A549 (cell line): ENCODE measurements at regions of chr11 and their contacts with region 1.

Region 1: DNA sequence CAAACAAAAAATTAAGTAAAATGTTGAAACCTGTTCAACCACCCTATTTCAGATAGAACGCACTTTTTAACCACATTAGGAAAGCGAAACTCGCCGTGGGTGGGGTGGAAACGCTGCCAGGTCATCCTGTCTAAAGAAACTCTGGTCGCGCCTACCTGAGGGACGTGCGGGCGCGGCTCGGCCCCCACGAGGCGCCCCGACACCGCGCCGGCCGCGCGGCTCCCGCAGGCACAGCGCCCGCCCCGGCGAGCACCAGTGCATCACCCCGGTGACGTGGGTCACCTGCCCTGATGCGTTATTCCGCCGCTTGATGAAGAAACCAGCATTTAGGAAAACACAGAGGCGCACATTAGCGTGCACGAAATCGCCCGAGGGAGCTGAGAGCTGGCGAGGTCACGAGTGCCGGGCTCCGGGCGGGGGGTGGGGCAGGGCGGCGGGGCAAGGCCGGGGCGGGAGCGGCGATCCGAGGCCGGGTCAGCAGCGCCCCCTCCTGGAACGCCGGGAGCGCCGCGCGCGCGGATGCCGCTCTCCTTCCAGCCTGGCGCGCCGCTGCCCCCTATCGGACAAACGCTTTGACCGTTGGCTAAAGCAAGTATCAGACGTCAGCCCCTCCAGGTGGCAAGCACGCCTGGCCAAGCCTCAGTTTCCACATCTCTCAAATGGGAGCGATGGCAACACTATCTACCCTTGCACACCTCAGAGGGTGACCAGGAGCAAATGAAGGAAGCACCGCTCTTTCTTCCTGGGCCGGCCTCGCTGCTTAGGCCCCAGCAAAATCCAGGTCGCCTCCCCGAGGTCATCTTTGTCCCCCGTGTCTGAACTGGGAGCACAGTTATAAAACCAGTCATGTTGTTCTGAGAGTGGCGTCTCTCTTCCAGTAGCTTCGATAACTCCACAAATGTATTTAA is 15.7 kb upstream of the SNX32 start:
- DNase-seq: peak; percentile 81 to 88
- ATAC-seq: peak; percentile 91 to 93
- H3K4me3 ChIP-seq: peak overlapping the region; percentile 57
- H3K27ac ChIP-seq: peak overlapping the region; percentile 82 to 89
- H3K4me1 ChIP-seq: peaks cover 6% of the 10 kb centered on the region; the same call in 1 of the 3 replicates
- CTCF ChIP-seq: peak; percentile 100
- EP300 ChIP-seq: no peak; a peak in 1 of 5 replicates
- POLR2A ChIP-seq: peak; percentile 50
- RAD21 ChIP-seq: peak; percentile 87 to 99

Region 2: DNA sequence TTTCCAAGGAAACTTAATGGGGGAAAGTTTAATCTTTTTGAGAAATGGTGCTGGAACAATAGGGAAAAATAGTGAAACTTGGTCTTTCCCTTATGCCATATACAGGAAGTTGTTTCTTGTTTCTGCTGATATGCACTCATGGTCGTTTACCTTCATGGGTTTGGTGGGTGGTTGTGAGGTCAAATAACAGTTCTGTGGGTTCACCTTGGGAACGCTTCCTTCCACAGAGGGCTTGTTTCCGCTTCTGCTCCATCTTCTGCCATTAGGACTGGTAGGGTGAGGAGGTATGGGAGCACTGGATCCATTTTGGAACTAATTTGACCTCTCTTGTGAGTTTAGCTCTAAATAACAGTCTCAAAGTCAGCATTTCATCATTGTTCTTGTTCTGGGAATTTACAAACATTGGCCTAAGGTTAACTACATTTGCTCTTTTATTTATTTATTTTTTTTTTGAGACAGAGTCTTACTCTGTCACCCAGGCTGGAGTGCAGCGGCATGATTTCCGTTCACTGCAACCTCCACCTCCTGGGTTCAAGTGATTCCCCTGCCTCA is 137.8 kb before region 1 on chr11:
- CTCF ChIA-PET with region 1: no interaction called
- POLR2A ChIA-PET with region 1: no interaction called
- DNase-seq: no peak
- ATAC-seq: no peak
- H3K4me3 ChIP-seq: no peak overlapping the region
- H3K27ac ChIP-seq: no peak overlapping the region
- H3K4me1 ChIP-seq: no peaks in the 10 kb centered on the region
- CTCF ChIP-seq: no peak
- EP300 ChIP-seq: no peak
- POLR2A ChIP-seq: no peak
- RAD21 ChIP-seq: no peak

Region 3: GRCh38 chr11:65743928-65744698 is 74.0 kb before region 1 on chr11:
- CTCF ChIA-PET with region 1: interaction called, 24 read pairs
- POLR2A ChIA-PET with region 1: no interaction called
- DNase-seq: peak; percentile 49 to 76
- ATAC-seq: peak; percentile 95 to 99
- H3K4me3 ChIP-seq: no peak overlapping the region
- H3K27ac ChIP-seq: no peak overlapping the region
- H3K4me1 ChIP-seq: no peaks in the 10 kb centered on the region
- CTCF ChIP-seq: peak; percentile 40; the same call in 1 of the 3 replicates
- EP300 ChIP-seq: no peak
- POLR2A ChIP-seq: no peak
- RAD21 ChIP-seq: peak; percentile 55 to 73

Region 4: GRCh38 chr11:65796726-65797601 is 21.1 kb before region 1 on chr11:
- CTCF ChIA-PET with region 1: interaction called, 17 read pairs
- POLR2A ChIA-PET with region 1: interaction called, 3 read pairs
- DNase-seq: no peak
- ATAC-seq: no peak; a peak in 1 of 6 replicates
- H3K4me3 ChIP-seq: no peak overlapping the region
- H3K27ac ChIP-seq: no peak overlapping the region
- H3K4me1 ChIP-seq: no peaks in the 10 kb centered on the region
- CTCF ChIP-seq: no peak
- EP300 ChIP-seq: no peak
- POLR2A ChIP-seq: no peak
- RAD21 ChIP-seq: no peak

Region 5: GRCh38 chr11:65833297-65834030 is 15.4 kb after region 1 on chr11 and contains the start of gene SNX32:
- CTCF ChIA-PET with region 1: interaction called, 25 read pairs
- POLR2A ChIA-PET with region 1: no interaction called
- DNase-seq: no peak
- ATAC-seq: peak in 1 of 2 experiments; percentile 87; a peak in 3 of 6 replicates
- H3K4me3 ChIP-seq: no peak within 1 kb of the TSS
- H3K27ac ChIP-seq: no peak within 1 kb of the TSS
- H3K4me1 ChIP-seq: no peaks in the 10 kb centered on the region
- CTCF ChIP-seq: no peak
- EP300 ChIP-seq: no peak
- POLR2A ChIP-seq: no peak
- RAD21 ChIP-seq: no peak
- polyA plus RNA-seq, gene SNX32: not detected in 2 replicates